ENCODE measurements at regions of chr10 and their contacts with region 1.

Region 1: DNA sequence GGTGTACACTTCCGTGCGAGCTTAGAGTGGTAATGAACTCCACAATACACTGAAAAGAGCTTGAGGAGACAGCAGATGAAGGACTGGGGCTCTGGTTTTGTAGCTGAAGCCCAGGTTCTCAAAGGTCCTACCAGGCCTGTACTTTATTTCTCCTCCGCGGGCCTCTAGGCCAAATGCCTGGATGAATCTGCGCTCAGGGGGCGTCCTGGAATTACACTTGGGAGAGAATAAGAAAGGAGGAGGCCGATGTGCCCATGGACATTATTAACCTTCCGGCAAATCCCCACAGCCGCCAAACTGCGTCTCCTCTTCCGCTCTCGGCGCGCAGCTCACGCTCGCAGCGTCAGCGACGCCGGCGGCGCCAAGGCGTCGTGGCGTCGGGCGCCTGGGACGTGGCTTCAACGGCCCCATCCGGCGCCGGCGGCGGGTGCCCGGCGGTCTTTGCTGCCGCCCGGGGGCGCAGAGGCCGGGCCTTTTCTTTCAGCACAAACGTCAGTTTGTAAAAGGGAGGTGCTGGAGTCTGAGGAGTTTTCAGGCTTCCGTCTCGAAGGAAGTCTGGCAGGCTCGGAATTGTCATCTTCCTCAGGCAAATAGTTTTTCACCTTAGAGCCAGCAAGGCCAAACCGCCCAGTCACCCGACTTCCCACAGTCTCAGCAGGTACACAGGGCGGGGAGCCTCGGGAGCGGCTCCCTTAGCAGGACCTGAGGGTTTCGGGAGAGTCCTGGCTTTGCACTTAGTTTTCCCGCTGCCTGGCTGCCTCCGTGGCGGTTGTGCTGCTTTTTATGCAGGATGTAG is at the start of gene CCDC7:
- DNase-seq: peak; percentile 83
- ATAC-seq: peak; percentile 98
- H3K4me3 Mint-ChIP-seq: peak within 1 kb of the TSS; percentile 98
- H3K27ac Mint-ChIP-seq: peak within 1 kb of the TSS; percentile 99
- H3K4me1 Mint-ChIP-seq: peaks cover 15% of the 10 kb centered on the region
- H3K27me3 Mint-ChIP-seq: peaks cover 6% of the 10 kb centered on the region
- CTCF ChIP-seq: no peak
- total RNA-seq, gene CCDC7: 16.8 and 20.0 TPM in 2 replicates

Region 2: DNA sequence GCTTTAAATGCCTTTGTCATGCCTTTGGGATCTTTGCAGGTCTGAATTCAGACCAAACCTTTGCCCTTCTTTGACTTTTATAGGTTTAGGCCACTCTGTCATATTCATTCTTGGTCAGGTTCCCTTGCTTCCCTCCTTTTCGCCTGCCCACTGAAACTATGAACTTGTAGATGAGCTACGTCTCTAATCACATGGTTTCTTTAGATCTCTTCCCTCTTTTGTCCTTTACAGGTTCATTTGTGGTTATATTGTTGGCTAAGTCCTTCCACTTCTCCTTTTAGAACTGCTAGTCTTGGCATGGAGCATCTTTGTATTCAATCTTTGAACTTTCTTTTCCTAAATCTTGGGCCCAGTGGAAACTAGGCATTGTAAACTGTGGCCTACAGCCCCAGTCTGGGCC is 1230.9 kb before region 1 on chr10:
- CTCF ChIA-PET with region 1: no interaction called
- POLR2A ChIA-PET with region 1: no interaction called
- intact Hi-C with region 1: no loop called
- DNase-seq: no peak
- ATAC-seq: no peak
- H3K4me3 Mint-ChIP-seq: no peak overlapping the region
- H3K27ac Mint-ChIP-seq: no peak overlapping the region
- H3K4me1 Mint-ChIP-seq: no peaks in the 10 kb centered on the region
- H3K27me3 Mint-ChIP-seq: no peaks in the 10 kb centered on the region
- CTCF ChIP-seq: no peak

Region 3: DNA sequence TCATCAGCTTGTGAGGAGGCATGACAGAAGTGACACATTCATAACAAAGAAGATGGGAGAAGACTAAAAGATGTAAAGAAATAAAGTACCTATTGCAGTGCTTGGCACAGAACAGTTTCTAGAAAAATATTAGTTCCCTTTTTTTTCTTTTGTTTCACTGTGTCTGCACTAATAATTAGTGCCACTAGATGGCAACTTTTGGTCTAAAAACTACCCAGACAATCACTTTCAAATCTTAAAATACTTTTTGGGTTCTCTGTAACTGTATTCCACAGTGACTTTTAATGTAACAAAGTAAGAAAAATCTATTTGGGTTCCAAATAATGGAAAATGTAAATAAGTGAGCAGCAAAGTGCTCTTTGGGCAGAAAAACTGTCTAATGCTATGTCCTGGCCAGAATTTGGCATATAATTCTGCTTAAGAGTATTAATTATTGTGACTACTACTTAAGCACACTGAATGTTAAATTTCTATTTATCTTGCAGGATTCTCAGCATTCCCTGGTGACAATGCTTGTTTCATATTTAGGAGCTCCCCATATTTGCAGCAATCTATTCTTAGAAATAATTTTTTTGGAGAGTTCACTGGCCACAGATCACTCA is 254.9 kb before region 1 on chr10:
- CTCF ChIA-PET with region 1: no interaction called
- POLR2A ChIA-PET with region 1: no interaction called
- intact Hi-C with region 1: loop called (anchors 1 kb)
- DNase-seq: no peak
- ATAC-seq: peak; percentile 75
- H3K4me3 Mint-ChIP-seq: no peak overlapping the region
- H3K27ac Mint-ChIP-seq: peak overlapping the region; percentile 75
- H3K4me1 Mint-ChIP-seq: peaks cover 4% of the 10 kb centered on the region
- H3K27me3 Mint-ChIP-seq: peaks cover 6% of the 10 kb centered on the region
- CTCF ChIP-seq: no peak

Region 4: DNA sequence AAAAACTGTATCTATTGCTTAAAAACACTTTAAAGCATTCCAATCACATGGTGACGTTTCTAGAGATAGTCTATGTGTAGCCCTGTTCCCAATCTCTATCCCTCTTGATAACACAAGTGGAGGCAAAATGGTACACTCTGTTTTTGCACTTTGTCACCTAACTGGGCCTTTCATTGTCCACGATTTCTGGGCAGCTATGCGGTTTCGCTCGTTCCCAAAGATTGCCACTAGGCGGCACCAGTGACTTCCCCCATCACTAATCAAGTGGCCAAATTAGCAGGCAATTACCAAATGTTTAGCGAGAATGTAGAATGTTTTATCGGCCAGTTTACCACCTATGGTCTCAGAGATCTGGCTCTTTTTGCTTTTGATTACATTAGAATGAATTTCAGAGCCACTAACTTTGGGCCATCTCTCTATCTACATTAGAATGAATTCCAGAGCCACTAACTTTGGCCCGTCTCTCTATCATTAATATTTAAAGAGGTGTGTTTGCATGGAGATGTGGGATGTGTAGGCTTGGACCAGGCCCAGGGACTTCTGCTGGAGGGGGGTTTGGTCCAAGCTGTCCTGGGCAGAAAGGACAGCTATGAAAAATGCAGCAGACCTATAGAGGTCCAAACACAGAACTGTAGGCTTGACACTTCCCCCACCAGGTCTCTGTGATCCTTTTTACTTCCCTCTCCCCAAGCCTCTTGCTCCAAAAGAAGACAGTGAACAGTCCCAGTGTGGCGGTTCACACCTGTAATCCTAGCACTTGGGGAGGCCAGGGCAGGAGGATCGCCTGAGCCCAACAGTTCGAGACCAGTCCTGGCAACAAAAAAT is 189.1 kb before region 1 on chr10:
- CTCF ChIA-PET with region 1: no interaction called
- POLR2A ChIA-PET with region 1: interaction called, 3 read pairs
- intact Hi-C with region 1: loop called (anchors 2 kb)
- DNase-seq: peak; percentile 52
- ATAC-seq: peak; percentile 88
- H3K4me3 Mint-ChIP-seq: no peak overlapping the region
- H3K27ac Mint-ChIP-seq: no peak overlapping the region
- H3K4me1 Mint-ChIP-seq: peaks cover 6% of the 10 kb centered on the region
- H3K27me3 Mint-ChIP-seq: no peaks in the 10 kb centered on the region
- CTCF ChIP-seq: peak; percentile 20

Region 5: DNA sequence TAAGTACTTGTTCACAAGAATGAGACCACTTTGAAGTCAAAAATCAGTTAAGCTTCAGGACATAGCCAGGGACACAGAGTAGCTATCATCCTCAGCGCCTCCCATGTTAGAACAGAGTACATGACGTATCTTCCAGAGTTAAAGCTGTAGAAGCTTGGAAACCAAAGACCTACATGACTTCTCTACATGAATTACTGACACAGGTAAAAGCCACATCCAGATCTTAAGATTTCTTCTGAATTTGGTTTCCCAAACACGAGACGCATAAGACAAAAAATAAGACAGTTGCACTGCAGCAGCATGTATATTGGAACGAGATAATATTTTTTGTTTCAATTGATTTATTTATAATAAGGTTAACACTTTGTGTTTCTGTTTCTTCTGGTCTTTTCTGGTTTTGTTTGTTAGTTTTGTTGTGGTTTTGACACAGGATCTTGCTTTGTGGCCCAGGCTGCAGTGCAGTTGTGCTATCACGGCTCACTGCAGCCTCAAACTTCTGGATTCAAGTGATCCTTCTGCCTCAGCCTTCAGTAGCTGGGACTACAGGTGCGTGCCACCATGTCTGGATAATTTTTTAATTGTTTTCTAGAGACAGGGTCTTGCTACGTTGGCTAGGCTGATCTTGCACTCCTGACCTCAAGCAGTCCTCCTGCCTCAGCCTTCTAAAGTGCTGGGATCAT is 88.7 kb before region 1 on chr10:
- CTCF ChIA-PET with region 1: no interaction called
- POLR2A ChIA-PET with region 1: no interaction called
- intact Hi-C with region 1: no loop called
- DNase-seq: no peak
- ATAC-seq: no peak
- H3K4me3 Mint-ChIP-seq: no peak overlapping the region
- H3K27ac Mint-ChIP-seq: no peak overlapping the region
- H3K4me1 Mint-ChIP-seq: peaks cover 39% of the 10 kb centered on the region
- H3K27me3 Mint-ChIP-seq: no peaks in the 10 kb centered on the region
- CTCF ChIP-seq: no peak

Region 6: GRCh38 chr10:32378363-32379317 is 67.3 kb before region 1 on chr10:
- CTCF ChIA-PET with region 1: interaction called, 14 read pairs
- POLR2A ChIA-PET with region 1: interaction called, 36 read pairs
- intact Hi-C with region 1: loop called (anchors 1 kb)
- DNase-seq: peak; percentile 73
- ATAC-seq: peak; percentile 94
- H3K4me3 Mint-ChIP-seq: no peak overlapping the region
- H3K27ac Mint-ChIP-seq: no peak overlapping the region
- H3K4me1 Mint-ChIP-seq: peaks cover 21% of the 10 kb centered on the region
- H3K27me3 Mint-ChIP-seq: no peaks in the 10 kb centered on the region
- CTCF ChIP-seq: no peak